Right ventricle myocardium inferior (tissue), 1 donor: ENCODE measurements at regions of chr10 and their contacts with region 1.

Region 1: DNA sequence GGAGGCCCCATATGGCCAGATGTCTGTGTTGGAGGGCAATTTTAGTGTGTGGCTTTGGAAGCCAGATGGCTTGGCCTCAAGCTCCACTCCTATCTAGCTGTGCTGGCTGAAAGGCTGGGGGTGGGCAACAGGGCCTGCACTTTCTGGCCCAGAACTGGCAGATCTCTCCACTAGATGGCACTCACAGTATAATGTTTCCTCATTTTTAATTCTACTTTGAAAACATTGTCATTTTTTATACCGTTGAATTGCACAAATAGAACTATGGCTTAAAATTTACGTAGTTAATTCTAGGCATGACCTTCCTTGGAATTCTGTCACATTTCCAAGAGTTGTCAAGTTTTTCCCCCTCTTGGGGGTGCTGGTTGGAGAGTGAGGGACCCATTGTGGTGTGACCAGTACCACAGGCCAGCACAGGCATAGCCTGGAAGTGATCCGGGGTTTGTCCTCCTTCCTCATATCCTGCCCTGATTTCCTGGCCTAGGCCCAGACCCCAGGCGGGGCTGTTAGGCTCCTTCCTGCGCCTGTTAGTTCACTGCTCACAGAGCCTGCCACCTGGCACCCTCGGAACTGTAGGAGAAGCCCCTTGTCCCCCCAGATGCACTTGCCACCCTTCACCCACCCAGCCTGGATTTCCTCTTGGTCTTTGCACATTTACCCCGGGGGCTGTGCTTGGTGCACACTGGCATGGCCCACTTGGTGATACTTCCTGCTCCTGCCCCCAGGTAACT is 52.8 kb downstream of the ARHGAP22 start:
- DNase-seq: no peak
- ATAC-seq: peak; percentile 55

Region 2: DNA sequence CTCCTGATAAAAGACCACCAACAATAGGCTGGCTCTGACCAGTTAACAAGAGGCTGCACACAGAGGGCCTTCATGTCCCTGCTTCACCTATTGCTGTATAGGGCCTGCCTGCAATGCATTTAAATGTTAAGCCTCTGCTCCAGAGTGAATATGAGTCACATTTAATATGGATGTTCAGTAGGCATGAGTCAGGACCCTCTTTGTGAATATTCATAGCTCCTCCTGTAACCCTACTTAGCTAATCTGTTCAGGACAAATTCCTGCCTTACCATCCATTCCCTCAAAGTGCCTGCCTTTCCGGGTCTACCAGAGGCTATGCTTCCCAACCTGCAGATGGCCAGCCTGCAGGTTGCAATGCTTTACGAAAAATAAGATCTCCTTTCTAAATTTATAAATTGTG is 20.4 kb after region 1 on chr10:
- intact Hi-C with region 1: no loop called
- DNase-seq: no peak
- ATAC-seq: no peak

Region 3: DNA sequence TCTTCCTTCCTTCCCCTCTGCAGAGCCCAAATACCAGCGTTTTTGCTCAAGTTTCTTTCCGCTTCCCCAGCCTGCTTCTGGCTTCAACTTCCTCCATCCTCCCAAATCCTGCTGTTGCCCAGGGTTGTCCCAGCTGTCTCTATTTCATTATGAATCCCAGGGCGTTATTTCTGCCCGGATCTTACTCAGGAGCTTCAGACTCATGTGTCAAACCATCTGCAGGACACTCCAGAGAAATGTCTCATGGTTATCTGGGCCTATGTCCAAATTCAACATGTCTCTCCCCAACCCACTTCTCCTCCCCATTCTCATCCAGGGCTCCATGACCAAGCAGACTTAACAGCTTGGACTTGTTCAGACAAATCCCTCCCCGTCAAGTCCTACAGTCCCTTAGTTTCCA is 37.2 kb after region 1 on chr10:
- intact Hi-C with region 1: no loop called
- DNase-seq: no peak
- ATAC-seq: peak; percentile 85

Region 4: DNA sequence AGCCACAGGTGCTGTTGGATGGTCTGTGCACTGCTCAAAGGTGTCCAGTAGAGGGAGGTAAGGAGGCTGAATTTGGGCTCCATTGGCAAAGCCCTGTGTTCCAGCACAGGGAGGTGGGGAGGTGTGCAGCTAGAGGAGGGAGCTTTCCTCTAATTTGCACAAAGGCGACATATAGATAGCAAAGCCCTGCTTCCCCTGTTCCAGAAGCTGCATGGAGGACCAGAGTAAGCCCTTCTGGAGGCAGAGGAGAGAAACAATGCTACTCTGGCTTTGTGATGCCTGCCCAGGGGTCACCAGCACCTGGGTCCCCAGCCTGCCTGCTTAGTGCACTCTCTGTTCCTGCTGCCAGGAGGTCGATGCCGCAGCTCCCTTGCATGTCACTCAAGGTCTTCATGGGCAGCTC is 56.3 kb after region 1 on chr10:
- intact Hi-C with region 1: loop called (anchors 5 kb)
- DNase-seq: no peak
- ATAC-seq: no peak